ENCODE measurements at regions of chr17 and their contacts with region 1.

Region 1: DNA sequence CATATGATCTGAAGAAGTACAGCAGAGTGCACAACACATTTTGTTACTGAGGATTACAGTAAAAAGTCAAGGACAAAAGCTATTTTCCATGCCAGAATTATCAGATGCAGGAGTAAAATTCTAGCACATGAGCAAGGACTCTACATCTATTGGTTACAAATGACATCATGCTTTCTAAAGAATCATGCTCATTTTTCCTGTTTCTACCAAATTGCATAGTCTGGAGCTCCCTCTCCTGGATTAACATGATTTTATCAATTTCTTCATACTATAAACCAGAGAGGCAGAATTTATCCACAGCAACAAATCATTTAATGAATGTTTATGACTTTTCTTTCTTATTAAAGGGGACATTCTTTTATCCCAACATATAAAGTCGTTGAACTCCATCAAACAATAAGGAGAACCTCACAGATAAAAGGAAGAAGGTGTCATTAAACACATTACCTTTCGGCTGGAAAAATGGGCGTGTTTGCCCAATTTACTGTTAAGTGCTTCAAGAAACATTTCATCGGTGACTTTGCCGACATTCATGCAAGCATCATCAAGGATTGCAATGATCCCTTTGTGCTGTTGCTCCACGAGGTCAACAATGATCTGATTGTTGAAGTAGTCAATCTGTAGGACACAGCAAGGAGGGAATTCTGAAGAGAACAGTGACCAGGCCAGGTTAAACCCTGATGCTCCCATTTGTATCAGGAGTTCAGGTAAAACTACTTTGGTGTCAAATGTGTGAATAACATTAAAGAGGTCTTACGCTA is 121.7 kb downstream of the MYO1D start:
- DNase-seq: no peak
- H3K4me3 Mint-ChIP-seq: no peak overlapping the region
- H3K27ac Mint-ChIP-seq: no peak overlapping the region
- H3K4me1 Mint-ChIP-seq: peaks cover 9% of the 10 kb centered on the region
- H3K27me3 Mint-ChIP-seq: no peaks in the 10 kb centered on the region
- CTCF ChIP-seq: peak; percentile 22

Region 2: DNA sequence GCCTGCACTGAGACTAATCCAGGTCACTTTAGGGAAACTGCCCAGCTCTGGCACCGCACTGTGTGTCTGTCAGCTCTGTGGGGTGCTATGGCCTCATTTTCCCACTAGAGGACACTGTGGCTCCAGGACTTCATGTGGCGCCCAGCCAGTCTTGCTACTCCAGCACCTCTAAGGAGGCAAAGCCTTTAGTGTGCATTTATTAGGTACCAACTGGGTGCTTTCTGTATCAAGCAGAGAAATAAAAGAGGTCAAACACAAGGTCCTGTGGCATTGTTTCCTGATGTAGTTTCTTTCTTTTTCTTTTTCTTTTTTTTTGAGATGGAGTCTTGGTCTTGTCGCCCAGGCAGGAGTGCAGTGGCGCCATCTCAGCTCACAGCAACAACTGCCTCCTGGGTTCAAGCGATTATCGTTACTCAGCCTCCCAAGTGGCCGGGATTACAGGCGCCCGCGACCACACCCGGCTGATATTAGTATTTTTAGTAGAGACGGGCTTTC is 502.1 kb before region 1 on chr17:
- CTCF ChIA-PET with region 1: no interaction called
- intact Hi-C with region 1: loop called (anchors 5 kb)
- DNase-seq: peak; percentile 79
- H3K4me3 Mint-ChIP-seq: no peak overlapping the region
- H3K27ac Mint-ChIP-seq: no peak overlapping the region
- H3K4me1 Mint-ChIP-seq: no peaks in the 10 kb centered on the region
- H3K27me3 Mint-ChIP-seq: peaks cover 40% of the 10 kb centered on the region
- CTCF ChIP-seq: peak; percentile 89

Region 3: GRCh38 chr17:32461853-32462617 is 293.2 kb before region 1 on chr17:
- CTCF ChIA-PET with region 1: interaction called, 3 read pairs
- intact Hi-C with region 1: loop called (anchors 5 kb)
- DNase-seq: peak; percentile 75
- H3K4me3 Mint-ChIP-seq: no peak overlapping the region
- H3K27ac Mint-ChIP-seq: no peak overlapping the region
- H3K4me1 Mint-ChIP-seq: peaks cover 17% of the 10 kb centered on the region
- H3K27me3 Mint-ChIP-seq: no peaks in the 10 kb centered on the region
- CTCF ChIP-seq: peak; percentile 66

Region 4: DNA sequence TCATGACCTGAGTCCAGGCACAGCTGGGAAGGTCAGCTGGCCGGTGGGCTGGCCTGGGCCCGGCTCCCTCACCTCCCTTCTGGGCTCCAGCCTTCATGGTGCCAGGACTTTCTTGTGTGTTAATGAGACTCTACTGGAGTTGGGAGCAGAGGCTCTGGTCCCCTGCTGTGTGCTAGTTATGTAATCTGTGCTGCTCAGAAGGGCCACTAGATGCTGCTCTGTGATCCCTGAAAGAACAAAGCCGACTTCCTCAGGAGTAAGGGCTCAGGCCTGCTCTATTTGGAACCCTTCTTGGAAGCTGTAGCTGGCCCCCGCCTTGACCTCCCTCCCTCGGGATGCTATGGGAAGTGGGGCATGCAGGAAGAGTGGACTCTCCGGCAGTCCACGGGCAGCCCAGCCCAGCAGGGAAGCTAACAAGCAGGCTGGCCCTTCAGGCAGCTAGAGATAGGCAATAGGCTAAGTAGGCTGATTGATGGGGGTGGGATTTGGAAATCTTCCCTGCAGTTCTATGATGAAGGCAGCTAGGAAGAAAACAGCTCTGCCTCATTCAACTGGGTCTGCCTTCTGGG is 271.7 kb before region 1 on chr17:
- CTCF ChIA-PET with region 1: no interaction called
- intact Hi-C with region 1: loop called (anchors 5 kb)
- DNase-seq: no peak
- H3K4me3 Mint-ChIP-seq: no peak overlapping the region
- H3K27ac Mint-ChIP-seq: no peak overlapping the region
- H3K4me1 Mint-ChIP-seq: peaks cover 17% of the 10 kb centered on the region
- H3K27me3 Mint-ChIP-seq: no peaks in the 10 kb centered on the region
- CTCF ChIP-seq: no peak

Region 5: DNA sequence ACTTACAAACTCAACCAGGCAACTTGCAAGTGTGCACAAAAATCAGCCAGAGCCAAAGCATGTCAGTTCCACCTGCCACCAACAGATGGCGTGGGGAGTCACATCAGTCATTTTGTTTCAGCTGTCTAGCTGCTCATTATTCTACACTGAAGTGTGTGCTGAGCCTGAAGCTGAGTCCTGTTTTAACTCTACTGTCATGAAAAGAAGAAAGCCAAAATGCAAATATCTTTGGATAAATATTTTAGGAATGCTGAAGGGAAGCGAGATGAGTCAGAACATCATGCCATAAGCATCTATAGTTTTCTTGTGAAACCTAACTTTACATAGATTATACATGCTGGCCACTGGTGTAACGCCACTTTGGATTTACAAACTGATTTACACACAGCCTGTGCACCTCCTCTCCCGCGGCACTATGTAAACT is 95.8 kb before region 1 on chr17:
- CTCF ChIA-PET with region 1: interaction called, 9 read pairs
- intact Hi-C with region 1: loop called (anchors 1 kb)
- DNase-seq: peak; percentile 70
- H3K4me3 Mint-ChIP-seq: no peak overlapping the region
- H3K27ac Mint-ChIP-seq: no peak overlapping the region
- H3K4me1 Mint-ChIP-seq: peaks cover under 1% of the 10 kb centered on the region
- H3K27me3 Mint-ChIP-seq: no peaks in the 10 kb centered on the region
- CTCF ChIP-seq: peak; percentile 88

Region 6: GRCh38 chr17:32742681-32743538 is 12.3 kb before region 1 on chr17:
- CTCF ChIA-PET with region 1: no interaction called
- intact Hi-C with region 1: no loop called
- DNase-seq: no peak
- H3K4me3 Mint-ChIP-seq: no peak overlapping the region
- H3K27ac Mint-ChIP-seq: no peak overlapping the region
- H3K4me1 Mint-ChIP-seq: peaks cover 27% of the 10 kb centered on the region
- H3K27me3 Mint-ChIP-seq: no peaks in the 10 kb centered on the region
- CTCF ChIP-seq: no peak

Region 7: GRCh38 chr17:32783602-32784001 is 28.4 kb after region 1 on chr17:
- CTCF ChIA-PET with region 1: no interaction called
- intact Hi-C with region 1: no loop called
- DNase-seq: no peak
- H3K4me3 Mint-ChIP-seq: no peak overlapping the region
- H3K27ac Mint-ChIP-seq: no peak overlapping the region
- H3K4me1 Mint-ChIP-seq: no peaks in the 10 kb centered on the region
- H3K27me3 Mint-ChIP-seq: no peaks in the 10 kb centered on the region
- CTCF ChIP-seq: peak; percentile 64